H1 (cell line): ENCODE measurements at regions of chr11 and their contacts with region 1.

Region 1: GRCh38 chr11:57480409-57481137 is 20.2 kb downstream of the RTN4RL2 start:
- DNase-seq: peak in 1 of 2 experiments; percentile 97
- H3K4me3 ChIP-seq: no peak overlapping the region
- H3K27ac ChIP-seq: no peak overlapping the region
- H3K4me1 ChIP-seq: peaks cover 7 to 32% (median 9%) of the 10 kb centered on the region in 4 experiments
- H3K27me3 ChIP-seq: peaks cover 0 to 35% (median 26%) of the 10 kb centered on the region in 4 experiments; a peak in 6 of 7 replicates
- CTCF ChIP-seq: peak; percentile 86 to 92 (median 90)
- EP300 ChIP-seq: no peak
- POLR2A ChIP-seq: no peak
- RAD21 ChIP-seq: peak; percentile 61 to 75

Region 2: DNA sequence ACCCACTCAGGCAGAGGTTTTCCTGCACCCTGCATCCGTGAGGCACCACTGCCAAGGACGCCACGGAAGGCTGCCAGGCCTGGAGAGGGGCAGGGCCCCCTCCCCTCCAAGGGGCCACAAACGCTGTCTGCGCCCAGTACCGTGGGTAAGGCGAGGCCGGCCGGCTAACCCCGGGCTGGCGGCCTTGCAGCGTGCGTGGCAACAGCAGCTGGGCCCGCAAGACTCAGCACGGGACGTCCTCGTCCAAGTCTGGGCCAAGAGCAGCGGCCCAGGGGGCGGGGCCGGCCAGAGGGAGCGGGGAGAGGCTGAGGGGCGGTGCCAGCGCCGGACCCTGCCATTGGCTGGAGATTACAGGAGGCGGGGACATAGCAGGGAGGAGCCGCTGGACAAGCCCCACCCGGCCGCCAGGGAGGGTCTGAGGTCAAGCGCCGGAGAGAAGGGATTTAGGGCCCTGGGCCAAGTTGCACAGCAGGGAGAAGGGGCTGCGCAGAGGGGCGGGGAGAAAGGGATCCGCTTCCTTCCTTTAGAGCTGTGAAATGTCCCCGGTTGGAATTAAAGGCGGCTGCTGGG is 18.9 kb after region 1 on chr11:
- CTCF ChIA-PET with region 1: interaction called, 193 read pairs
- POLR2A ChIA-PET with region 1: interaction called, 90 read pairs
- DNase-seq: peak; percentile 89 to 98
- H3K4me3 ChIP-seq: peak overlapping the region; percentile 5 to 48 (median 36); a peak in 5 of 8 replicates
- H3K27ac ChIP-seq: no peak overlapping the region
- H3K4me1 ChIP-seq: peaks cover 7 to 18% (median 14%) of the 10 kb centered on the region in 4 experiments
- H3K27me3 ChIP-seq: no peaks in the 10 kb centered on the region
- CTCF ChIP-seq: no peak
- EP300 ChIP-seq: no peak
- POLR2A ChIP-seq: peak in 1 of 2 experiments; percentile 24; a peak in 2 of 3 replicates
- RAD21 ChIP-seq: peak; percentile 1 to 6; a peak in 2 of 4 replicates

Region 3: DNA sequence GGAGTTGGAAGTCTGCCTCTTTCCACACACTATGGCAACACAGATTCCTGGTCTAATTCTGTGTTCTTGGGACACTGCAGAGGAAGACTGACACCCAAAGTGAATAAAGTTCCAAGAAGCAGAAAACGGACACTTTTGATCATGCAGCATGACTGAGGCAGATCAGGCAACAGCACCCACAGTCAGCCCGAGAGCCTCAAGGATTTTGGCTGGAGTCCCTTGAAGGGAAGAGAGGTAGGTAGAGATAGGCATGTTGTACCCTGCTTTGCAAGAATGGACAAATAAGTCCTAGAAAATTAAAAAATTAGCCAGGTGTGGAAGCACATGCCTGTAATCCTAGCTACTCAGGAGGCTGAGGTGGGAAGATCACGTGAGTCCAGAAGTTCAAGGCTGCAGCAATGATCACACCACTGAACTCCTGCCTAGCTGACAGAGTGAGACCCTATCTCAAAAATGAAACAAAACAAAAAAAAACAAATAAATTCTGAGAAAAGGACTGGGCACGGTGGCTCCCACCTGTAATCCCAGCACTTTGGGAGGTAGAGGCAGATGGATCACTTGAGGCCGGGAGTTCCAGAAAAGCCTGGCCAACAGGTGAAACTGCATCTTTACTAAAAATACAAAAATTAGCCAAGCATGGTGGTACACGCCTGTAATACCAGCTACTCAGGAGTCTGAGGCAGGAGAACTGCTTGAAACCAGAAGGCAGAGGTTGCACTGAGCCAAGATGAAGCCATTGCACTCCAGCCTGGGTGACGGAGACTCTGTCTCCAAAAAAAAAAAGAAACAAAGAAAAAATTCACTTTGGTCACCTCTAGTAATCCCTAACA is 28.0 kb after region 1 on chr11:
- CTCF ChIA-PET with region 1: interaction called, 1,146 read pairs
- POLR2A ChIA-PET with region 1: interaction called, 35 read pairs
- DNase-seq: no peak
- H3K4me3 ChIP-seq: no peak overlapping the region
- H3K27ac ChIP-seq: no peak overlapping the region
- H3K4me1 ChIP-seq: peaks cover 0 to 3% (median 1%) of the 10 kb centered on the region in 4 experiments
- H3K27me3 ChIP-seq: no peaks in the 10 kb centered on the region; a peak in 1 of 7 replicates
- CTCF ChIP-seq: no peak
- EP300 ChIP-seq: no peak
- POLR2A ChIP-seq: no peak
- RAD21 ChIP-seq: no peak

Region 4: DNA sequence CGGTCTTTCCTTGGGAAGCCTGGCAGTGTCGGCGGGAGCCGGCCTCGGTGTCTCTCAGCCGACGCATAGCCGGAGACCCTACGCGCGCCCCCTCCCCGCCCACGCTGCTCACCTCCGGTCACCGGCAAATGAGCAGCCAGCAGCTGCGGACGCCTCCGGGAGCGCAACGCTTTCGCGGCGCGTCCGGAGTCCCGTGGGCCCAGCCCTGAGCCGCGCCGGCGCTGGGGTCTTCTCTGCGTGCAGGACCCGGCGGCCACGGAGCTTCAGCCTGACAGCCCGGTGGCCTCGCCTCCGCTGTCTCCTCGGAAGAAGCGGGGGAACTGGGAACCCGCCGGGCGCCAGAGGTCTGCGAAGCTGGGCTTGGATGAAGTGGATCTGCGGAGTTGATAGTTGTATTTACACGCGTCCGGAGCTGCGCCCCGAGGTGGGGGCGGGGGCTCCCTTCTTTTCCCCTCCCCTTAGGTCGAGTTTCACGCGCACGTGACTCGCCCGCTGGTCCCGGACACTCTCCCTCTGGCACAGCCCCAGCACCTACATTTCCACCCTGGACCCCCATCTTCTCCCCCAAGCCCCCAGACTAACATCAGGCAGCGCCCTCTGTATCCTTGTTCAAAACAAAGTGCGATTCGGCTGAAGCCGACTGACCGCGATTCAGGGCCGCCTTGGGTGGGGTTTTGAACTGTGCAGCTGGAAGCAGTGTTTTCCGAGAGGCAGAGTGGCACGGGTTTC is 34.9 kb after region 1 on chr11 and contains the start of gene SLC43A1:
- CTCF ChIA-PET with region 1: interaction called, 1,146 read pairs
- POLR2A ChIA-PET with region 1: interaction called, 35 read pairs
- DNase-seq: peak in 1 of 2 experiments; percentile 66
- H3K4me3 ChIP-seq: peak within 1 kb of the TSS; percentile 49 to 76 (median 68)
- H3K27ac ChIP-seq: no peak within 1 kb of the TSS
- H3K4me1 ChIP-seq: peaks cover 3 to 10% (median 5%) of the 10 kb centered on the region in 4 experiments
- H3K27me3 ChIP-seq: peaks cover 0 to 21% (median 10%) of the 10 kb centered on the region in 4 experiments; a peak in 4 of 7 replicates
- CTCF ChIP-seq: no peak
- EP300 ChIP-seq: no peak
- POLR2A ChIP-seq: no peak; a peak in 1 of 3 replicates
- RAD21 ChIP-seq: 0 out of 4 replicates have a peak, but pooled peaks of 1 of the 2 experiments have one; percentile 0
- total RNA-seq, gene SLC43A1: 30.1 and 34.5 TPM in 2 replicates

Region 5: GRCh38 chr11:57546869-57547475 is 66.4 kb after region 1 on chr11:
- CTCF ChIA-PET with region 1: interaction called, 5 read pairs
- POLR2A ChIA-PET with region 1: interaction called, 10 read pairs
- DNase-seq: no peak
- H3K4me3 ChIP-seq: no peak overlapping the region
- H3K27ac ChIP-seq: no peak overlapping the region
- H3K4me1 ChIP-seq: peaks cover 0 to 15% (median 11%) of the 10 kb centered on the region in 4 experiments; a peak in 6 of 7 replicates
- H3K27me3 ChIP-seq: no peaks in the 10 kb centered on the region; a peak in 2 of 7 replicates
- CTCF ChIP-seq: peak in 2 of 3 experiments; percentile 19 to 21; a peak in 2 of 4 replicates
- EP300 ChIP-seq: no peak
- POLR2A ChIP-seq: no peak
- RAD21 ChIP-seq: peak; percentile 1 to 17; a peak in 1 of 4 replicates

Region 6: DNA sequence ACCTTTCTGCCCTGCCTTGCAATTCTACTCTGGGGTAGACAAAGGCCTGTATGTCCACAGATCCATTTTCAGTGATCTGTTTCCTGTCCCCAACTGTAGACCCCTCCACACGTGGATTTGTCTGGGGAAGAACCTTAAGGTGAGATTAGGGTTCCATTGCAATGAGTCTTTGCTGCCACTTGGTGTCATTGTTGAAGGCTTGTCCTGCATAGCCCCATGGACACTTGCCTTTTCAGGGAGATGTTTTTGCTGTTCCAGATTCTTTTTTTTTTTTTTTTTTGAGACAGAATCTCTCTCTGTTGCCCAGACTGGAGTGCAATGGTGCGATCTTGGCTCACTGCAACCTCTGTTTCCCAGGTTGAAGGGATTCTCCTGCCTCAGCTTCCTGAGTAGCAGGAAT is 138.8 kb after region 1 on chr11:
- CTCF ChIA-PET with region 1: no interaction called
- POLR2A ChIA-PET with region 1: no interaction called
- DNase-seq: no peak
- H3K4me3 ChIP-seq: no peak overlapping the region
- H3K27ac ChIP-seq: no peak overlapping the region
- H3K4me1 ChIP-seq: no peaks in the 10 kb centered on the region
- H3K27me3 ChIP-seq: no peaks in the 10 kb centered on the region
- CTCF ChIP-seq: peak in 2 of 3 experiments; percentile 52 to 72; a peak in 3 of 4 replicates
- EP300 ChIP-seq: no peak
- POLR2A ChIP-seq: no peak
- RAD21 ChIP-seq: peak; percentile 38 to 61